Head of caudate nucleus (tissue), 42 donors: ENCODE measurements at regions of chr14 and their contacts with region 1.

Region 1: DNA sequence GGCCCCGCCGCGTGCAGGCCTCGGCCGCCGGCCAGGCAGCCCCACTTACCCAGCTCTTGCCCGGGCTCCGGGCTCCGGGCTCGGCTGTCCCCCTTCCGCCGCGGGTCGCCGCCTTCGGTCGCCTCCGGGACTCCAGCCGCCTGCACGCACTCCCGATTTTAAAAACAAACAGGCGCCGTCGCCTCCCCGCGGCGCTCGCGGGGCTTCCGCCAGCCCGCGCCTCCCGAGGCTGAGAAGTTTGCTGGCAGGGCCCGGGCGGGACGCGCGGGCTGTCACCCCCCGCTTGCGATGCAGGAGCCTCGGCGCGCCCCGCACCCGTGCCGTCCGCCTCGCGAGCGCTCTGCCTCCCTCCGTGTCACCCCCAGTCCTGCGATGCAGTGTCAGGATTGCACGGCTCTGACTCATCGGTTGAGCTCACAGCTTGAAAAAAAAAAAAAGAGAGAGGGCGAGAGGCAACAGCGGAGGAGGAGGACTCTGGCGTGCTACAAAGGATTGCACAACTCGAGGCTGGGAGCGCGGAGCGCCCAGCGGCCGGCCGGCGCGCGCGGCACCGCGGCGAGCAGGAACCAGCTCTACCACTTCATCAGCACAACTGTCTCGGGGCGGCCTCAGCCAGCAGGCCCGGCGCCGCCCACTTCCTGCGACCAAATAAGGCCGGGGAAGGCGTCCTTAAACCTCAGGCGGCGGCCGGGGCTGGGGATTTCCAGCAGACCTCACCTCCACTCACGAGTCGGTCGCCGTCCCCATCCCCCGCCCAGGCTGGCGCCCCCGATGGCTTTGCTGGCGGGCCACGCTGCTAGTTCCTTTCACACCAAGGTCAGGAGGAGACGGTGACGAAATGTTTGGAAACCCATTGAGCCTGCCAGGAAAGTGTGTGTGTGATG is 45.8 kb upstream of the PNMA1 start:
- DNase-seq: peak; percentile 84 to 96 (median 91)

Region 2: DNA sequence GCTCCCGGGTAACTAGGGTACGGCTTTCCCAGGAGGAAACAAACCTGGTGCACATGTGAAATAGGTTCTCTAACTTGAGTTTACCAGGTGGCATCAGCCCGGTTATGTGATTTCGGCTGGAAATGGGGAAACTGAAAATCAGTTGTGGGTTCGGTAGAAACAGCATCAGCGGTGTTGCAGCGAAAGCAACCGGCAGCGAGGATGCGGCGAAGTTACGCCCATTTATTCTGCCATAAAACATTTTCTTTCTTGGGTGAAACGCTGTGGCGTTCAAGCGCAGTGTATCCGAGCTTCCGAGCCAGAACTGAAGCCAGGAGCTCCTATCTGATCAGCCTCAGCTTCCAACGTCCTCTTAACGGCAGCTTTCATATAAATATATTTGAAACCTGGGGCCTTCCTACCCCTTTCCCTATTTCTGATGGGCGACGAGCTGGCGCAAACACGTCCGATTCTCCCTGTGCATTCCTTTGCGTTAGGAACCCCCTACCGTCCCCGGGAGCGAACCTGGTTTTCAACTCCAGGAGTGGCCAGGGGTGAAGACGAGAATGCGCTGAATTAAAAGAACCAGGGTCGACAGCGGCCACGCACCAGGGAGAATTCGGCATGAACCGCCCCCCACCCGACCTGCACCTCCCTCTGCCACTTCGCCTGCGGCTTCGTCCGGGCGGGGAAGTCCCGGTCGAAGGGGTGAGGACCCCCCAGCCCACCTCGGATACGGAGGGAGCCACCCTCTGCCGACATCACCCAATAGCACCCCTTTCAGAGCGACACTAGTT is 867.7 kb before region 1 on chr14:
- intact Hi-C with region 1: no loop called
- DNase-seq: peak in 39 of 42 donors; percentile 2 to 64 (median 33)

Region 3: GRCh38 chr14:73728717-73729330 is 31.1 kb before region 1 on chr14:
- intact Hi-C with region 1: loop called (anchors 2 kb)
- DNase-seq: peak; percentile 62 to 96 (median 86)

Region 4: DNA sequence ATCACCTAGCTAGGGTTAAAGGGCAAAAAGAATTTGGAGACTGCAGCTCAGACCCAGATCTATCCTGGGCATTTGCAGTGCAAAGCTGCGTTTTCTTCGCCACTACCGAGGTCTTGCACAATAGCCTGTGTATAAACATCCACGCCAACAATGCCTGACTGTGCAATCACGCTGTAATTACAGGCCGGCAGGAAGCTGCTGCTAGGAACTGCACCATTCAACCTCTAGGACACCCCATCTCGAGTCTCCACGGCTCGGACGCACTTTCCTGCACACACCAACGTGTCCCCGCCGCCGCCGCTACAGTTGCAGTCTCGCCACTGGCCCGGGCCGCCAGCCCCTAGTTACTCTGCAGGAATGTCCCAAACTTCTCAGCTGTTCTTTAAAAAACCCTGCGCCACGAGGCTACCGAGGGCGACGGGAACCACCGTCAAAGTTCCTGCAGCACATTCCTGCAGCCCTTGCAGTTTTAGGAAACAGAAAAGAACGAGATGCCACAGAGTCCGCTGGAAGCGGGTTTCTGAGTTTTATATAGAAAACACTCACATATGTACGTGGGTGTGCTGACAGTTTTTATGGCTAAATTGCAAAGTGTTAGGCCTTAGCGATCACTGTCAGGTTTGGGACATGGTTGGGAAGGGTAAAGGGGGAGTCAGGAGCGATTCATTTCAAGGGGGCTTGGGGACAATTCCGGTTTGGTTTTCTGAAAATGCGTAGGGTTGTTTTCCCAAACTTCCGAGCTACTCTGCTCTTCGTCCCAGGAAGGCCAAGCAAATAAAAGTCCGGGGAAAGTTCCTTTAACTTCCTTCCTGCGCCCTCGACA is 26.1 kb after region 1 on chr14:
- intact Hi-C with region 1: loop called (anchors 2 kb)
- DNase-seq: peak; percentile 40 to 83 (median 66)

Region 5: DNA sequence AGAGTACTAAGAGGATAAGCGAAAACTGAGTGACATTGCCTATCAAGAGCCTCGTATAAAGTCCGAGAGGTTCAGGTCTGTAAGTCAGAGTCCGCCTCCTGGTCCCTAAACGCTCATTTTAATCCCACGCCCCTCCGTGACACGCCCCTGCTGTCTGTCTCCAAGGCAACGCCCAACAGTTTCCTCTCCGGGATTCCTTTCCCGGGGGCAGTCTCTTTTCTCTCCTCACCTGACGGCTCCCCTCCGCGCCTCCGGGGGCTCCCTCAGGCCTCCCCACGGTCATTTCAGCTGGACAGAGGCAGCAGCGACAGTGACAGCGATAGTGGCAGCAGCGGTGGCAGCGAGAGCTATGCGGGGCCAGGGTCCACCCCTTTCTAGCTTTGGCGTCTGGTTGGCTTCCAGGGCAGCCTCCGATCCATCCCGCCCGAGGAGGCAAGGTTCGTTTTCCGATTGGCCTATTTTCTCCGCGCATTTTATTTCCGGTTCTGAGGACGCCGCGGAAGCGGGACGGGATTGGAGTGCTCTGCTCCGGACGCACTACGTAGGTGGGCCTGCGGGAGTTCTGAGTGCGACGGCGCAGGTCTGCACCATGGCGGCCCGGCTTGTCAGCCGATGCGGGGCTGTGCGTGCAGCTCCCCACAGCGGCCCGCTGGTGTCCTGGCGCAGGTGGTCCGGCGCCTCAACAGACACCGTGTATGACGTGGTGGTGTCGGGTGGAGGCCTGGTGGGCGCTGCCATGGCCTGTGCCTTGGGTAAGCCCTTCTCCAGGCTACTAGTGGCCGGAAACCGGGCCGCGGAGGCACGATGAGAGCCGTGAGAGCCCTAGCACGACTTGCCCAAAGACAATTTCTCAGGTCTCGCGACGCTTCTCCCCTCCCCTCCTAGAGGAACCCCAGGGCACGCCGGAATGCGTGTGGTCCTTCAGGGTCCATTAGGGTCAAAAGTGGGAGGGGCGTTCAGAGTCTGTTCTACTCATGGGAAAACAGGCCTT is 190.1 kb after region 1 on chr14 and contains the starts of genes COQ6 and FAM161B:
- intact Hi-C with region 1: loop called (anchors 10 kb)
- DNase-seq: peak; percentile 86 to 98 (median 95)